ENCODE measurements at regions of chr5 and their contacts with region 1.

Region 1: DNA sequence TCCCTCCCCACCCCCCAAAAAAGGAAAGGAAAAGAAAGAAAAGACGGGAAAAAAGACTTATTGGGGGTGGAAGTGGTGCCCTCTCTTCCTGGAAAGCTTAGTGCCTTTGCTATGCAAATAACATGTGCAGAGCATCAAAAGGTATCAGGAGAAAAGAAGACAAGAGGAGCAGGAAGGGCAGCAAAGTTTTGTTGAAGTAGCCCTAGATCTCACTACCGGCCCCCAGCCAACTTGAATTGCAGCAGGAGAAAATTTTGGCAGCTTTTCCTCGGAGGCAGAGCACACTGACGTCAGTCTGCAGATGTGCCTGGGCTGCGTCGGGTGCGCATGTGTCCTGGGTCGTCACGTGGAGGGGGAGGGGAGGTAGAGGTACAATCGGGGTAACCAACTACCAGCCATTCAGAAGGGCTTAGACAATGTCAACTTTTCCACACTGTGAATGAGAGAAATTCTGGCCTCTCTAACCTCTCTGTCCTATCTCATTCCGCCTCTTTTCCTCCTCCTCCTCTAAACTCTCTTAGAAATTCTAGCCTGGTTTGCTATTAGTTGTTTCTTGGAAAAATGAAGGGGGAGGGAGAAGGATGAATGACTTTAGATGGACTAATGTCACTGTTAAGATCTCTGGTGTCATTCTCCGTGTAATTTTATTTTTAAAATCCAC is at the start of gene ADAMTS6:
- DNase-seq: peak; percentile 93 to 94
- ATAC-seq: peak; percentile 93
- H3K4me3 ChIP-seq: peak within 1 kb of the TSS; percentile 98
- H3K27ac ChIP-seq: peak within 1 kb of the TSS; percentile 82 to 87
- H3K4me1 ChIP-seq: no peaks in the 10 kb centered on the region
- H3K27me3 ChIP-seq: no peaks in the 10 kb centered on the region
- total RNA-seq, gene ADAMTS6: 7.1 to 11.5 TPM

Region 2: DNA sequence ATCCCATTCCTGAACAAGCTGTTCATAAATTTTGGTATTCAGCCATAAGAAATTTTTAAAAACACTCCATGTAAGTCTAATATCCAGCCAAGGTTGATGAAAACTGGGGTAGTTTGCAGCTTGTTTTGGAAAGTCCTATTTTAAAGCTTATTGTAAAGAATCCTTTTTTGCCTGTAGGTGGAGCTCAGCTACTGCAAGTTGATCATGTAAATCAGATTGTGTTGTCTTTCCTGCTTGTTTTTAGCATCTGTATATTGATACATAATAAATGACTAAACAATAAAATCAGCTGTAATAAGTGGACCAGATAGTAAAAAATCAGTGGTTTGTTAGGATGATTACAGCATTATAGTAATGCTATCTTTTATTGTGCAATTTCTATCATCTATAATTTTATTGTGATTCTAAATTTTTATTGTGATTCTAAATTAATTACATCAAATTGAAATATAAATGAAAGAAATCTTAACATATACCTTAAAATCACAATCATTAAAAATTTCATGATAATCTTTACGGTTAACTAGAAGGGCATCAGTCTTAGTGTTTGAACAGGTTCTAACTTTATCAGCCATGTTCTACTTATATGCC is 670.6 kb before region 1 on chr5:
- intact Hi-C with region 1: loop called (anchors 2 to 5 kb)
- DNase-seq: no peak
- ATAC-seq: peak; percentile 48
- H3K4me3 ChIP-seq: no peak overlapping the region
- H3K27ac ChIP-seq: no peak overlapping the region
- H3K4me1 ChIP-seq: no peaks in the 10 kb centered on the region
- H3K27me3 ChIP-seq: no peaks in the 10 kb centered on the region

Region 3: DNA sequence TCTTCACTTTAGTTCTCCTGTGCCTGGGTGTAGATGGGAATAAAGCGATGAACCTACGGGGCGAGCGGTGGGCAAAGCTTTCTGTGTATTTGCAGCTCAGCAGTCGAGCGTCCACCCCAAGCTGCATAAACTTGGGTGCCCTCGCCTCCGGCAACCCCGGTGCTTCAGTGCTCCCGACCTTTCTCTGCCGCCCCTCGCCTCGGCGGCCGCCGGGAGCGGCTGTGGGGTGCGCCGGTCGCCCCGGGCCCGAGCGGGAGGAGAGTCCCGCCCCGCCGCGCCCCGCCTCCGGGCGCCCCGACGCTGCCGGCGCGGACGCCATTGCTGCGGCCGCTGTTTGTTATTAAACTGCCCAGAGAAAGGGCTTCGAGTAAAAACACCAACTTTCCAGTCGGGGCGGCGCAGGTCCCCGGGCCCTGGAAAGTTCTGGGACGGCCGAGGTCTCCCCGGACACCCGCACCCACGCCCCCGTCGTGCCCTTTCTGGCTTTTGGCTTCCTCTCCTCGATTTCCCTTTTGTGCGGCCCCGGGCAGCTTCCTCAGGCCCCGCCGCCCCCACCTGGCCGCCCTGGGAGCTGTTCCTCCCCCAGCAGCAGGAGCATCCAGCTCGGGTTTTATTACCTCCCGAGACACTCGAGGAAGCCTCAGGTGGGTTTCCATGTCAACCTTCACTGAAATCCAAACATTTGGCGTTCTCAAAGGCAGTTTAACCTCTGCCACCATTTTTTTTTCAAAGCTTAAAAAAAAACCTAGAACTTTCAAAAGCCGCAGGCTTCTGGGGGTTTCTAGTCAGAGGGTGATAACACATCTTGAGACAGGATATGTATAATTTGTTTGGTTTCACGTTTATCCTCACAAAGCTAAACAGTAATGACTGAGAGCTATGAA is 378.7 kb before region 1 on chr5:
- intact Hi-C with region 1: loop called (anchors 2 to 5 kb)
- DNase-seq: peak; percentile 57 to 88
- ATAC-seq: peak; percentile 87
- H3K4me3 ChIP-seq: peak overlapping the region; percentile 44 to 64
- H3K27ac ChIP-seq: peak overlapping the region in 1 of 2 donors; percentile 59
- H3K4me1 ChIP-seq: peaks cover 0 to 3% of the 10 kb centered on the region in 2 donors
- H3K27me3 ChIP-seq: no peaks in the 10 kb centered on the region

Region 4: DNA sequence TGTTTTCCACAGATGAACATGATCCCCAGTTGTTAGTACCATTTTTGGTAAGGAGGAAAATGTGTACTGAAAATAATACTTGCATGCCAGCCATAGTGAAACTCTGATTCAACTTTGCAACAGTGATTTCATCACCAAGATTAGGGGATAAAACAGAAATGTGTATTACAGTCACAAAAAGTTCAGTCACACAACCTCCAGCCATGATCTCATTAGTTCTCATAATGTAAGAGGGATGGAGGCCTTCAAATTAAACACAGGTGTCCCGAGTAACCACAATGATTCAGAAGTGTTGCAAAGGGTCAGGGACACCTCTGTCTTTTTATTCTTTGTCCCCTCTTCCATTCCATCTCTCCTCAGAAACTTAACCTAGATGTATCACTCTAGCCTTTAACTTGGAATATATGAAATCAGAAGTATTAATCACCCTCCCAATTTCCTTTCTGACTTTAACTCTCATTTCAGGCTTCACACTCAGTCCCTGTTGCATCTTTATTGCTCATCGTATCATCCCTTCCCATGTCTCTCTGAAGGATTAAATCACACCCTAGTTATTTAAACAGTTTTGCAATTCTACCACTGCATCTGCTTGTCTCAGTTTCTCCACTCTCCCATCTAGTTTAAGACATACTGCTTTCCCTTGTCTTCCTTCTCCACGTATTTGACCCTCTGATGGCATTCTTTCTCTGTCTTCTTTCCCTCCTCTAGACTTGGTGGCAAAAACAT is 291.3 kb before region 1 on chr5:
- intact Hi-C with region 1: loop called (anchors 5 to 10 kb)
- DNase-seq: no peak
- ATAC-seq: peak; percentile 48
- H3K4me3 ChIP-seq: no peak overlapping the region
- H3K27ac ChIP-seq: peak overlapping the region in 1 of 2 donors; percentile 40
- H3K4me1 ChIP-seq: no peaks in the 10 kb centered on the region
- H3K27me3 ChIP-seq: no peaks in the 10 kb centered on the region

Region 5: GRCh38 chr5:65955746-65956145 is 474.0 kb after region 1 on chr5:
- intact Hi-C with region 1: no loop called
- DNase-seq: no peak
- ATAC-seq: no peak
- H3K4me3 ChIP-seq: no peak overlapping the region
- H3K27ac ChIP-seq: no peak overlapping the region
- H3K4me1 ChIP-seq: peaks cover 2 to 8% of the 10 kb centered on the region in 2 donors
- H3K27me3 ChIP-seq: no peaks in the 10 kb centered on the region

Measured in aorta (tissue), 5 donors.